PC-3 (cell line): ENCODE measurements at regions of chr13 and their contacts with region 1.

Region 1: GRCh38 chr13:51113969-51114368 is 2.9 kb upstream of the C13orf42 start:
- DNase-seq: no peak
- ATAC-seq: no peak
- H3K4me3 ChIP-seq: no peak overlapping the region
- H3K27ac ChIP-seq: no peak overlapping the region
- H3K4me1 ChIP-seq: no peaks in the 10 kb centered on the region
- H3K27me3 ChIP-seq: peaks cover 5% of the 10 kb centered on the region; the same call in 1 of the 2 replicates
- CTCF ChIP-seq: no peak

Region 2: GRCh38 chr13:50116430-50116973 is 997.5 kb before region 1 on chr13:
- CTCF ChIA-PET with region 1: no interaction called
- POLR2A ChIA-PET with region 1: interaction called, 12 read pairs
- intact Hi-C with region 1: no loop called
- DNase-seq: peak; percentile 53
- ATAC-seq: peak; percentile 85
- H3K4me3 ChIP-seq: peak overlapping the region; percentile 55; the same call in 1 of the 2 replicates
- H3K27ac ChIP-seq: peak overlapping the region; percentile 59
- H3K4me1 ChIP-seq: peaks cover 8% of the 10 kb centered on the region
- H3K27me3 ChIP-seq: no peaks in the 10 kb centered on the region
- CTCF ChIP-seq: no peak

Region 3: GRCh38 chr13:51093574-51093973 is 20.4 kb before region 1 on chr13:
- CTCF ChIA-PET with region 1: no interaction called
- POLR2A ChIA-PET with region 1: no interaction called
- intact Hi-C with region 1: no loop called
- DNase-seq: peak; percentile 59
- ATAC-seq: no peak
- H3K4me3 ChIP-seq: no peak overlapping the region
- H3K27ac ChIP-seq: no peak overlapping the region
- H3K4me1 ChIP-seq: no peaks in the 10 kb centered on the region
- H3K27me3 ChIP-seq: no peaks in the 10 kb centered on the region
- CTCF ChIP-seq: no peak